ENCODE measurements at regions of chr9 and their contacts with region 1.

Region 1: DNA sequence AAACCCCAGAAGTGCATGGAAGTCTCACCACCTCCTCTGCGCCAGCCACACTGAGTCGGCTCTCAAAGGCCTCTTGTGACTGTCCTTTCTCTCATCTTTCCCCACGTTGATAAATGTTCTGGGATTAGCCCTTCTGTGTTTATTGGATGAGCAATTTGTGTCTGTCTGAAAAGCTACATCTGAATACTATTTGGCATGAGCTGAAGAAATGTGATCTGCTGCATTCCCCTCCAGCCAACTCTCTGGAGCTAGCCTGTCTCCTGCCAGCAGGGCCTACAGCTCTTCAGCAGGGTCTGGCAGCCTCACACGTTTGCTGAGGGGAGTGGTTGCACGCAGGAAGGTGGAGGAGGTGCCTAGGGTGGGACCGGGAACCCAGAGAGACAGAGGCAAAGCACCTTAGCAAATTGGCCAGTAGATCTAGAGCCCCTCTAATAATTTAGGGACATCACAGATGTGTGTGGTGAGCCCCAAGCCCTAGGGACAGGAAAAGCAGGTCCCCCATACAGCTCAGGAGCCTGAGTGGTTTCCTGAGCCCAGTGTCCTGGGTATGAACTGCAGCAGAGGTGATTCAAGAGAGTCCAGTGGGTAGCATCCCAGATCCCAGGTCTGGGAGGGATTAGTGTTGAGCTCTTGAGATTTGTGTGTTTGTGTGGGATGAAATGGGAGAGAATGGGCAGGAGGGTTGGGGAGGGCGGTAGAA is 20.5 kb upstream of the B4GALT1 start:
- DNase-seq: no peak
- H3K4me3 ChIP-seq: no peak overlapping the region
- H3K27ac ChIP-seq: no peak overlapping the region
- H3K4me1 ChIP-seq: no peaks in the 10 kb centered on the region
- H3K27me3 ChIP-seq: no peaks in the 10 kb centered on the region
- CTCF ChIP-seq: no peak
- EP300 ChIP-seq: no peak
- POLR2A ChIP-seq: no peak
- RAD21 ChIP-seq: no peak

Region 2: DNA sequence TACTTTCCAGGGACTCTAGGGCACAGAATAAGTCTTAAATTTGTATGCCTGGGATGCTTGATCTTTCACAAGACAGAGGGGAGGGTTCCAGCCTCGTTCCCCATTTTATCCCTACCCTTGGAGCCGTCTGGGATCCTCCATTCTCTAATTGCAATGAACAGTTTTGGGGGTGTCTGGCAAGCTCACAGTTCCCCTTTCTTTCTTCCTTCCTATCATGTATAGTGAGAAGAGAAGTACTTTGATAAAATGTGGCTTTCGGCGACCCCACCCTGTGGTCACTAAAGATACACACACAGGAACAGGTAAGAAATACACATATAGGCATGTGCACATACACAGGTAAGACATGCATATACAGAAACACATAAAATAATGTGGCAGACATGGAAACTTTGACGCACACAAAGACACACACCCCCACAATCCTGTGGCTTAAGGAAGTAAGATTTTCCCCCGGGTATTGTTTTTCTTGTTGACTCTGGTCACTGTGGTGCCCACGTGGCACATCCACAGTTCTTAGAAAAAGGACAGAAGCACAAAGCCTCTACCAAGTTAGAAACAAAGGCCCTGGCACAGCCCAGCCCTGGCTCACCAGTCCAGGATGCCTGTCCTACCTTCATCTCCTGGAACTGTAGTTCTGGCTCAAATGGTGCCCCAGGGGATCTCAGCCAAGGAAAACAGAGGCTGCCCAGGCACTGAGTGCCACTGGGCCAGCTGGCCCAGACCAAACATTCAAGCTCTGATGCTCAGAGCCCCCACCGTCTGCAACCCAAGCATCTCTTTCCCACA is 104.9 kb before region 1 on chr9:
- CTCF ChIA-PET with region 1: no interaction called
- POLR2A ChIA-PET with region 1: no interaction called
- DNase-seq: no peak
- H3K4me3 ChIP-seq: no peak overlapping the region
- H3K27ac ChIP-seq: no peak overlapping the region
- H3K4me1 ChIP-seq: no peaks in the 10 kb centered on the region; a peak in 1 of 7 replicates
- H3K27me3 ChIP-seq: no peaks in the 10 kb centered on the region
- CTCF ChIP-seq: no peak
- EP300 ChIP-seq: no peak
- POLR2A ChIP-seq: no peak
- RAD21 ChIP-seq: no peak

Region 3: DNA sequence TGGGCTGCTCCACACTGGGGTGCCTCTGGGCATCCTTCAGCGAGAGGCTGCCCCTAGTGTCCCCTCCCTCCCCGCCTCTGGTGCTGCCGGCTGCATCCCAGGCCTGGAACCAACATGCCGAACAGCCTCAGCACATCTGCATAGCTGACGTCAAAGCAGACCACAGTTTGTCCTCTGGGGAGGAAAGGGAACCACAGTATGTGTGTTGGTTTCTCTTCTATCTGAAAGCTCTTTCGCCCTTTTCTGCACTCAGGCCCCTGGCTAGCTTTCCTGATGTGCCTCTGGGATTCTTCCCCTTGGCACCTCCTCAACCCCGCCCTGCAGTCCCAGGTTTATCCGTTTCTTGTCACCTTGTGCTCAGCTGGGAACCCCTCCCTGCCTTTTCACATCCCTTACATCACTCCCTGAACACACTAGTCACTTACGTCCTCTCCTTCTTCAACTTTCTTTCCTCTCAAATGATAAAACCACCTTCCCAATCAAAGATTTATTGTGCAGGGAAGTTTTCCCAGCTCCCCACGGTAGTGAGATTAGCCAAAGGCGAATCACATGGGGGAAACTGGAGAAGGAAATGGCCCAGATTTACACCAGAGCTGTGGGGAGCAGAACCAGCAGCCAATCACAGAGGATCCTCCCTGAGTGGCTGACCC is 15.0 kb after region 1 on chr9:
- CTCF ChIA-PET with region 1: interaction called, 11 read pairs
- POLR2A ChIA-PET with region 1: no interaction called
- DNase-seq: no peak
- H3K4me3 ChIP-seq: no peak overlapping the region
- H3K27ac ChIP-seq: no peak overlapping the region
- H3K4me1 ChIP-seq: no peaks in the 10 kb centered on the region
- H3K27me3 ChIP-seq: 0 out of 7 replicates have a peak, but pooled peaks cover 0 to 1% (median 0%) of the 10 kb centered on the region in 4 experiments
- CTCF ChIP-seq: no peak
- EP300 ChIP-seq: no peak
- POLR2A ChIP-seq: no peak
- RAD21 ChIP-seq: no peak